Activated naive CD4-positive, alpha-beta T cell treated with anti-CD3 and anti-CD28 coated beads for 36 hours (primary cell): ENCODE measurements at regions of chr2 and their contacts with region 1.

Region 1: DNA sequence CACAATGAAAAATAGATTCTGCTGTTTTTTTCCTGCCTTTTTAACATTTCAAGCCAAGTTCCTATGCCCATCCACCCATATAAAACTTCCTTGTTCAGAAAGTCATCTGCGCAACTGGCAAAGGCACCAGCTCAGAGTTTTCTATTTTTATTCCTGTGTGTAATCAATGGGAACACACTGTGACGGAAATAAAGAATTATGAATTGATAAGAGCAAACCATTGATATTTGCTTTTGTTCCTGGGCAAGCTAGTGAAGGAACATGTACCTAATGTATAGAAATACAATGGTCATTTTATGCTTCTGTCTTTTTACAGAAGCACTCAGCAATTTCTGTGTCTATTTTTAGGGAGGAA is 30.8 kb upstream of the AAK1 start:
- DNase-seq: no peak
- H3K4me3 Mint-ChIP-seq: no peak overlapping the region
- H3K27ac Mint-ChIP-seq: no peak overlapping the region
- H3K4me1 Mint-ChIP-seq: peaks cover 28% of the 10 kb centered on the region
- H3K27me3 Mint-ChIP-seq: no peaks in the 10 kb centered on the region

Region 2: DNA sequence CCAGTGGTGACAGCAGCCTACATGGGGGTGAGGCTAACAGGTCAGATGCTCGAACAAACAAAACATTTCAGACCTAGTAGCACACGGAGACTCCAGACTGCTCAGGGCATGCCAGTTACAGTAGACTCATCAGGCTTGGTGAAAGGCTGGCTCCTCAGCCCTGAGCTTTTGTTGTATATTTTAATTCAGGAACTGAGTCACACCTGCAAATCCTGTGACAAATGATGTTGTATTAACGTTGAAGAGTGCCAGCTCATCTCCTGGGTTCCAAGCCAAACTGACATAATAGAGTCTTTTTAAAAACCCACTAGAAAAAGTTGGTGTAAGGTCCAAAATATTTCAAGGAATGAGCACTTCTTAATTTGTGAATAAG is 1676.8 kb before region 1 on chr2:
- CTCF ChIA-PET with region 1: no interaction called
- intact Hi-C with region 1: no loop called
- DNase-seq: no peak
- H3K4me3 Mint-ChIP-seq: no peak overlapping the region
- H3K27ac Mint-ChIP-seq: no peak overlapping the region
- H3K4me1 Mint-ChIP-seq: no peaks in the 10 kb centered on the region
- H3K27me3 Mint-ChIP-seq: peaks cover 10% of the 10 kb centered on the region

Region 3: GRCh38 chr2:69422198-69422597 is 252.1 kb before region 1 on chr2:
- CTCF ChIA-PET with region 1: no interaction called
- intact Hi-C with region 1: no loop called
- DNase-seq: no peak
- H3K4me3 Mint-ChIP-seq: no peak overlapping the region
- H3K27ac Mint-ChIP-seq: no peak overlapping the region
- H3K4me1 Mint-ChIP-seq: peaks cover 7% of the 10 kb centered on the region
- H3K27me3 Mint-ChIP-seq: no peaks in the 10 kb centered on the region

Region 4: DNA sequence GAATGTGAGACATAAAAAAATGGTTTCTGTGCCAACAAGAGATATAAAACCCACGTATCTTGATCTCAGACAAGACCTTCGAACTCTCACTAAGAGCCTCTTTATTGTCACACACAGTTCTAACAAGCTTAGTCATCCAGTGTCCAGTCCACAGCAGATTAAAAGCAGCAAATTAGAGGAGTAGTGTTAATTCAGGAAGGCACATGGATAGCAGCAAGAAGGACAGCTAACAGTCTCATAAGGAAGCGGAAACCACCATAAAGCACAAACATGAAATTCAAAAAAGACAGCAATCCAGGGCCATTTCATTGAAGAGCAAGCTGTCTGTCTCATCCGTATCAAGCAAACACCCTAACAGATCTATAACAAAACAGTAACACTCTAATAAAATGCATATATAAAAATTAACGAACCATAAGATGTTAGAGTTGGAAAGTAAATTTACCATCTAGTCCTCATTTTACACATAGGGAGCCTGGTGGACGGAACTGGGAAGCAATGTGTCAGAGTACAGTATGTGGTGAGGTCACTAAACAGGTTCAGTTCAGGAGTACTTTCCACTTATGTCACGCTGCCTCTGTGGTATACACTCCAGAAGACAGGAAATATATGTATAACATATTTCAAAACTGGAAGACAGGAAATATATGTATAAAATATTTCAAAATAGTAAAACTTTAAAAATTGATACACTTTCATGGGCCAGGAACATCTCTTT is 49.1 kb before region 1 on chr2:
- CTCF ChIA-PET with region 1: no interaction called
- intact Hi-C with region 1: no loop called
- DNase-seq: peak; percentile 45
- H3K4me3 Mint-ChIP-seq: no peak overlapping the region
- H3K27ac Mint-ChIP-seq: no peak overlapping the region
- H3K4me1 Mint-ChIP-seq: peaks cover 17% of the 10 kb centered on the region
- H3K27me3 Mint-ChIP-seq: no peaks in the 10 kb centered on the region

Region 5: DNA sequence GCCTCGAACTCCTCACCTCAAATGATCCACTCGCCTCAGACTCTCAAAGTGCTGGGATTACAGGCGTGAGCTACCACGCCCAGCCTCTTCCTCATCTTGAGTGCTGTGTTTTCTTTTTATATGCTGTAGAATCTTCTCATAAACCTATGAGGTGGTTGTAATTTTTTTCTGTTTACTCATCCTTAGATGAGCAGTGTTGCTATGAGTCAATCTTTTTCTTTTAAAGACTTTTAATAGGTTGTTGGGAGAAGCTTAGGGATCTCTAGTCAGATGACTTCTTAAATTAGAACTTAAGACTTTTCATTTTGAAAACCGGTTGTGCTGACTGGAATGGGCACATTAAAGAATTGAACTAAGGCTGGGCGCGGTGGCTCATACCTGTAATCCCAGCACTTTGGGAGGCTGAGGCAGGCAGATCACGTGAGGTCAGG is 22.1 kb before region 1 on chr2:
- CTCF ChIA-PET with region 1: interaction called, 4 read pairs
- intact Hi-C with region 1: loop called (anchors 1 kb)
- DNase-seq: peak; percentile 55
- H3K4me3 Mint-ChIP-seq: no peak overlapping the region
- H3K27ac Mint-ChIP-seq: peak overlapping the region; percentile 66
- H3K4me1 Mint-ChIP-seq: peaks cover 44% of the 10 kb centered on the region
- H3K27me3 Mint-ChIP-seq: no peaks in the 10 kb centered on the region

Region 6: DNA sequence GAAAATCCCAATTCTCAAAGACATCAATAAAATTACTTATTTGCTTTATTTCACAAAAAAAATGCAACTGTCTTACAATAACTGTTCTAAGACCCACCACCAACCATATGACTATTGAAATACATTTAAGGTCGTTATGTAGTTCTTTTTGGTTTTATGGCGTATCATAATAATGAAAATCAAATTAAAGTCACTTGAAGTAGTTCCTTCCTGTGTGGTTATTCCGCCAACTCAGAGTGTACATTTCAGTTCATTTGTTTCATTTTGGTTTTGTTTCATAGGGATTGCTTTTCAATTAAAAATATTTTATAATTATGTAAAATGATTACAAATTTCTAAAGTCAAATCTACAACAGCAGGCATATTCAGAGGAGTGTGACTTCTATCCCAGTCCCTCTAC is 15.2 kb after region 1 on chr2:
- CTCF ChIA-PET with region 1: interaction called, 3 read pairs
- intact Hi-C with region 1: loop called (anchors 2 kb)
- DNase-seq: no peak
- H3K4me3 Mint-ChIP-seq: peak overlapping the region; percentile 39
- H3K27ac Mint-ChIP-seq: no peak overlapping the region
- H3K4me1 Mint-ChIP-seq: peaks cover 74% of the 10 kb centered on the region
- H3K27me3 Mint-ChIP-seq: no peaks in the 10 kb centered on the region